ENCODE measurements at regions of chr6 and their contacts with region 1.

Region 1: DNA sequence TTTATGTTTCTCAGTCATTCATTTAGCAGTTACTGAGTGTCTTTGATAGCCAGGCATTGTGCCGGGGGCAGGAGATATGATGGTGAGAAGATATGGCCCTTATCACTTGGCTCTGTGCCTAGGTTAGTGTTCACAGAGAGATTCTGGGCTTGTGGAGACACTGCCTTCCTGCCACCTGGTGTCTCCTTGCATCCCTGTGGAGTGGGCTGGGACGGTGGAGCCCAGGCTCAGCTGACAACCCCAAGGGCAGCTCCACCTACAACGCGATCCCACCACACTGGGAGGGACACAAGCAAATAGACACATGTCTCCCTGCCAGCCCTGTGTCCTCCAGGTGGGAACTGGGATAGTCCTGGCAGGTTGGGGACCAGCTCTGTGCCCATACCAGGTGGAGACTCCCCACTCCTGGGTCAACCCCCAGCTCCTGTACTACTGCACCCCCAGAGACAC is 30.3 kb upstream of the VEGFA start:
- DNase-seq: no peak

Region 2: DNA sequence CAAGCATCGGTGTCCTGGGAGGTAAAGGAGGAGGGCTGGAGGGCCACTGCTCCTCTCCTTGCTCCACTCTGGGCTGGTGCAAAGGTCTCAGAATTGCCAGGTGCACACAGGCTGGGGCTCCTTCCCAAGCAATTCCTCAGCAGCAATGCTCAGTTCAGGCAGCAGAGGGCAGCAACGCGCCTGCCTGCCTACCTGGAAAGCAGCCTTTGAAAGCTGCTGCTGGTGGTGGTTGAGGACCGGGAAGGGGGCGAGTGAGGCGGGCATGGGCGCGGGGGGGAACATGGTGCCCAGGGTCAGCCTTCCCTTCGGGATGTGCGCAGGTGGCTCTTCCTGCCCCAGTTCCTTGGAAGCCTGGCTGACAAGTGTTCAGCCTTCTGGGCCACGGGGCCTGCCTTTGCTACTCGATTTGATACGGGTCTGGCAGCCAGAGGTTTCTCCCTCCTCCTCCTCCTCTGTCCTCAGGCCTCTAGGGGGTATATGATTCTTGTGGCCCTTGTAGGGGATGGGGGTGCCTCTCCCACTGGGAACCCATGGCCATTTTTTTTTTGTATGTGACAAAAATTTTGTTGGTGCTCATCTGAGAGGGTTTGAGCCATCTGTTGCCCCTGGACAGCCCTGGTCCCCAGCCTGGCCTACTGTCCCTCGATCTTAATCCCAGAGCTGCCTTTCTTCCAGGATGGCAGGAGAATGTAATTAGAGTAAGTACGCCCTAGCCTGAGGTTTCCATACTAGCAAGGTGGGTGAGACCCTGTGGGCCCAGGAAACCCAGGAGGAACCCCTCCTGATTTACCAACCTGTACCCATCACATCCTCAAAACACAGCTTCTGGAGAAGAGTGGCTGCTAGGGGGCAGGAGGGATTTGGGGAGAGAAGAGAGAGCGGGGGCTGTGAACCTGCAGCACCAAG is 72.2 kb before region 1 on chr6:
- CTCF ChIA-PET with region 1: interaction called, 11 read pairs
- POLR2A ChIA-PET with region 1: no interaction called
- DNase-seq: peak; percentile 86